ENCODE measurements at regions of chr1 and their contacts with region 1.

Region 1: GRCh38 chr1:25895365-25895993 is 10.7 kb downstream of the STMN1 start:
- DNase-seq: peak; percentile 93
- ATAC-seq: peak; percentile 100
- H3K4me3 Mint-ChIP-seq: no peak overlapping the region
- H3K27ac Mint-ChIP-seq: no peak overlapping the region
- H3K4me1 Mint-ChIP-seq: peaks cover 17% of the 10 kb centered on the region
- H3K27me3 Mint-ChIP-seq: no peaks in the 10 kb centered on the region
- CTCF ChIP-seq: peak; percentile 97

Region 2: GRCh38 chr1:25874934-25875855 is 20.3 kb before region 1 on chr1 and contains the start of gene PAQR7:
- CTCF ChIA-PET with region 1: interaction called, 30 read pairs
- POLR2A ChIA-PET with region 1: interaction called, 8 read pairs
- intact Hi-C with region 1: no loop called
- DNase-seq: peak; percentile 77
- ATAC-seq: peak; percentile 88
- H3K4me3 Mint-ChIP-seq: peak within 1 kb of the TSS; percentile 88
- H3K27ac Mint-ChIP-seq: peak within 1 kb of the TSS; percentile 81
- H3K4me1 Mint-ChIP-seq: peaks cover 5% of the 10 kb centered on the region
- H3K27me3 Mint-ChIP-seq: peaks cover 4% of the 10 kb centered on the region
- CTCF ChIP-seq: no peak
- total RNA-seq, gene PAQR7: 6.8 to 8.0 TPM

Region 3: DNA sequence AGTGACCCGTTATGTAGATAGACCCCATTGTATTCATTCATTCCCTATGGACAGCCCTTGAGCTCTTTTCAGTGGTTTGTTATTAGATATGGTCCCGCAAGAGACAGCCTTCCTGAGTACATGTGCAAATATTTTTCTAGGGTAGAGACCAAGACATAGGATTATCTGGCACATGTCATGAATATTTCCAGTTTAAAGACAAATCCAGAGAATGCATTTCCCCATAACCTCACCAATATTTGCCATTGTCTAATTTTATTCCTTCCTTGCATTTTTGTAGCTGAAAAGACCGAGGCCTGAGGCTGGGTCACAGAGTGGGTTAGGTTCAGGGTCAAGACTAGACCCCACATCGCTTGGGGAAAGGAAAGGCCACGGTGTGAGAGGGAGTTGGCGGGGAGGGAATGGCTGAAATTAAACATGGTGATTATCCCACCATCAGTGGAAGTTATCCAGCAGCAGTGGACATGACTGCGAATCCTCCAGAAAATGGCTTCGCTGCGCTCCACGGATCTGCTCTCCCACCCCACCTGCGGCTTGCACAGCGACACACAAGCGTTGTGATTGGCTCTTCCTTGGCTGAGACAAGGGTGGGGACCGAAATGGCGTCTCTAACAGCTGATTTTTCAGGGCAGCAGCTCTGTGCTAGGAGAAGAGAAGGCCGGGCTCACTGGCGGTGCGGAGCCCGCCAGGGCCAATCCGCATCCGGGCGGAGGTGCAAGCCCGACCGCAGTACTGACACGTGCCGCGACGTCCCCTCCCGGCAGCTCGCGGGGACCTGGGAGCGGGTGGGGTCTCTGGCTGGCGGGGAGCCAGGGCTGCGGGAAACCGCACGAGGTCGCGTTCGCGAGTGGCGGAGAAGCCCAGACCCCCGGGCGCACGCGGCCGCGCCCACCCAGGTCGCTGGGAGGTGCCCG is 26.8 kb after region 1 on chr1:
- CTCF ChIA-PET with region 1: interaction called, 18 read pairs
- POLR2A ChIA-PET with region 1: interaction called, 5 read pairs
- intact Hi-C with region 1: no loop called
- DNase-seq: peak; percentile 66
- ATAC-seq: peak; percentile 83
- H3K4me3 Mint-ChIP-seq: peak overlapping the region; percentile 68
- H3K27ac Mint-ChIP-seq: peak overlapping the region; percentile 67
- H3K4me1 Mint-ChIP-seq: peaks cover 29% of the 10 kb centered on the region
- H3K27me3 Mint-ChIP-seq: peaks cover 6% of the 10 kb centered on the region
- CTCF ChIP-seq: no peak

Region 4: GRCh38 chr1:25990702-25991395 is 95.4 kb after region 1 on chr1:
- CTCF ChIA-PET with region 1: interaction called, 417 read pairs
- POLR2A ChIA-PET with region 1: interaction called, 160 read pairs
- intact Hi-C with region 1: no loop called
- DNase-seq: peak; percentile 62
- ATAC-seq: peak; percentile 88
- H3K4me3 Mint-ChIP-seq: peak overlapping the region; percentile 84
- H3K27ac Mint-ChIP-seq: peak overlapping the region; percentile 96
- H3K4me1 Mint-ChIP-seq: peaks cover 51% of the 10 kb centered on the region
- H3K27me3 Mint-ChIP-seq: no peaks in the 10 kb centered on the region
- CTCF ChIP-seq: no peak

Region 5: DNA sequence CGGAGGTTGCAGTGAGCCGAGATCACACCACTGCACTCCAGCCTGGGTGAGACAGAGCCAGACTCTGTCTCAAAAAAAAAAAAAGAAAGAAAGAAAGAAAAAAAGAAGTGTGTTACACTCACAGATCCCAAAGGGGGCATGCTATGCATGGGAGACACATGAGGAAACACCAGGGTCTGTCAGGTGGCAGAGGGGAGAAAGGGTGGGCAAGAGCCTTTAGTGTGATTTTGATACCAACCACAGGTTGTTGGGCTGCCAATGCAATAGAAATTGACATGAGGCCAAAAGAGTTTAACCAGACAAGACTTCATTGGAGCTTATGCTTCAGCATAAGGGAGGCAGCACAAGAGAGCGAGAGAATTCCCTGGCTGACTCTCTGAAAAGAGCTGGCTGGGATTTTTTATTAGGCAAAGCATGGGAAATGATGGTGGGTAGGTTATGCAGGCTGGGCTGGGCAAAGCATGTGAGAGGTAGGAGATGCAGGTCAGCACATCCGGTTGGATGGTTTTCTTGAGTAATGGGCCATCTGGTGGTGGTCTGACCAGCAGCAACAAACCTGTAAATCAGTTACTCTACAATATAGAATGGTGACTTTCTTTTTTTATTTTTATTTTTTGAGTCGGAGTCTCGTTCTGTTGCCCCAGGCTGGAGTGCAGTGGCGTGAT is 114.4 kb after region 1 on chr1:
- CTCF ChIA-PET with region 1: interaction called, 417 read pairs
- POLR2A ChIA-PET with region 1: interaction called, 4 read pairs
- intact Hi-C with region 1: no loop called
- DNase-seq: peak; percentile 20
- ATAC-seq: no peak
- H3K4me3 Mint-ChIP-seq: no peak overlapping the region
- H3K27ac Mint-ChIP-seq: no peak overlapping the region
- H3K4me1 Mint-ChIP-seq: no peaks in the 10 kb centered on the region
- H3K27me3 Mint-ChIP-seq: no peaks in the 10 kb centered on the region
- CTCF ChIP-seq: no peak

Region 6: GRCh38 chr1:26035959-26036755 is 140.7 kb after region 1 on chr1:
- CTCF ChIA-PET with region 1: interaction called, 19 read pairs
- POLR2A ChIA-PET with region 1: no interaction called
- intact Hi-C with region 1: no loop called
- DNase-seq: peak; percentile 81
- ATAC-seq: peak; percentile 77
- H3K4me3 Mint-ChIP-seq: peak overlapping the region; percentile 91
- H3K27ac Mint-ChIP-seq: peak overlapping the region; percentile 72
- H3K4me1 Mint-ChIP-seq: peaks cover 14% of the 10 kb centered on the region
- H3K27me3 Mint-ChIP-seq: no peaks in the 10 kb centered on the region
- CTCF ChIP-seq: peak; percentile 100

Region 7: GRCh38 chr1:26190373-26190987 is 295.0 kb after region 1 on chr1 and contains the start of gene CATSPER4:
- CTCF ChIA-PET with region 1: no interaction called
- POLR2A ChIA-PET with region 1: no interaction called
- intact Hi-C with region 1: no loop called
- DNase-seq: no peak
- ATAC-seq: no peak
- H3K4me3 Mint-ChIP-seq: no peak within 1 kb of the TSS
- H3K27ac Mint-ChIP-seq: peak within 1 kb of the TSS; percentile 19
- H3K4me1 Mint-ChIP-seq: peaks cover 6% of the 10 kb centered on the region
- H3K27me3 Mint-ChIP-seq: no peaks in the 10 kb centered on the region
- CTCF ChIP-seq: no peak
- total RNA-seq, gene CATSPER4: not detected

Measured in activated CD8-positive, alpha-beta T cell treated with anti-CD3 and anti-CD28 coated beads for 36 hours (primary cell).